ENCODE measurements at regions of chr1 and their contacts with region 1.

Region 1: DNA sequence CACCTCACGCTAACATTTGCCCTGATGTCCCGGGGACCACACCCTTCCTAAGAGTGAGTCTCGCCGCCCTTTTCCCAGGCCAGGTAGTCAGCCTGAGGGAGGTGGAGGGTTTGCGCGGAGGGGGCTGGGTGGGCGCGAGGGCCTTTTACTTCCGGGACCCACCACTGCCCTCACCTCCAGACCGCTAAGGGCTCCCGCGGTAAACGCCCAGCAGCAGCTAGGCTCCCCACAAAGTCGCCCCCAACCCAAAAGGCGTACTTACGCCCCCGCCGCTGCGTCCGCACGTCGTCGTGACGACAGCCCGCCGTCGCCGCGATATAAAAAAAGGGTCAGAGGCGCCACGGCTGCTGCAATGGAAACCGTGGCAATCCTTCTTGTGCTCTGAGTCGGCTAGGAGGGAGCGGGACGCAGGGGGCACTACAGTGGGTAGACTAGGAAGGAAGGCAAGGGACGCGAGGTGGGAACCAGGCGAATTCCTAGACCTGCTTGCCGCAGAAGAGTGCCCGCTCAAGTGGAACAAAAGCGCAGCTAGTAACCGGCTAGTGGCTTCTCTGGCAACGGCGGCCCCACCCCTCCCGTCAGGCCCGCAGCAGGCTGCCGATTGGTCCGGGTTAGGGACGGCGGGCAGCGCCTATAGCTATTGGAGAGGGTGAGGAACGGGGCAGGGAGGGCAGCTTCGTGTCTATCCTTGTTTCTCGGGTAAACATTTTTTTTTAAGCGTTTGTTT is at the start of gene ODF2L:
- DNase-seq: peak; percentile 94
- H3K4me3 Mint-ChIP-seq: peak within 1 kb of the TSS; percentile 95
- H3K27ac Mint-ChIP-seq: peak within 1 kb of the TSS; percentile 91
- H3K4me1 Mint-ChIP-seq: peaks cover 44% of the 10 kb centered on the region
- H3K27me3 Mint-ChIP-seq: no peaks in the 10 kb centered on the region
- total RNA-seq, gene ODF2L: 17.8 to 18.0 TPM

Region 2: GRCh38 chr1:84862810-84863251 is 1533.1 kb before region 1 on chr1:
- CTCF ChIA-PET with region 1: no interaction called
- intact Hi-C with region 1: loop called (anchors 10 kb)
- DNase-seq: peak; percentile 63
- H3K4me3 Mint-ChIP-seq: peak overlapping the region; percentile 16
- H3K27ac Mint-ChIP-seq: peak overlapping the region; percentile 51
- H3K4me1 Mint-ChIP-seq: peaks cover 49% of the 10 kb centered on the region
- H3K27me3 Mint-ChIP-seq: peaks cover 3% of the 10 kb centered on the region

Region 3: GRCh38 chr1:86370601-86371022 is 25.3 kb before region 1 on chr1:
- CTCF ChIA-PET with region 1: no interaction called
- intact Hi-C with region 1: no loop called
- DNase-seq: no peak
- H3K4me3 Mint-ChIP-seq: no peak overlapping the region
- H3K27ac Mint-ChIP-seq: no peak overlapping the region
- H3K4me1 Mint-ChIP-seq: no peaks in the 10 kb centered on the region
- H3K27me3 Mint-ChIP-seq: no peaks in the 10 kb centered on the region

Region 4: GRCh38 chr1:87077959-87078639 is 682.2 kb after region 1 on chr1:
- CTCF ChIA-PET with region 1: no interaction called
- intact Hi-C with region 1: loop called (anchors 5 kb)
- DNase-seq: peak; percentile 20
- H3K4me3 Mint-ChIP-seq: no peak overlapping the region
- H3K27ac Mint-ChIP-seq: peak overlapping the region; percentile 31
- H3K4me1 Mint-ChIP-seq: peaks cover 15% of the 10 kb centered on the region
- H3K27me3 Mint-ChIP-seq: no peaks in the 10 kb centered on the region